ENCODE measurements at regions of chr2 and their contacts with region 1.

Region 1: GRCh38 chr2:64052468-64053241 is 33.4 kb upstream of the VPS54 start:
- DNase-seq: peak in 2 of 5 donors; percentile 30 to 37
- ATAC-seq: peak; percentile 72 to 91 (median 74)
- H3K4me3 ChIP-seq: no peak overlapping the region
- H3K27ac ChIP-seq: peak overlapping the region; percentile 14 to 84 (median 74)
- H3K4me1 ChIP-seq: peaks cover 0 to 30% (median 5%) of the 10 kb centered on the region in 12 donors
- H3K27me3 ChIP-seq: no peaks in the 10 kb centered on the region
- CTCF ChIP-seq: no peak
- POLR2A ChIP-seq: no peak

Region 2: GRCh38 chr2:64144057-64145013 is 91.7 kb after region 1 on chr2 and contains the start of gene PELI1:
- intact Hi-C with region 1: loop called in 8 of 10 experiments (anchors 2 to 5 kb)
- DNase-seq: peak; percentile 95 to 97 (median 96)
- ATAC-seq: peak; percentile 99 to 100 (median 100)
- H3K4me3 ChIP-seq: peak within 1 kb of the TSS; percentile 81 to 99 (median 94)
- H3K27ac ChIP-seq: peak within 1 kb of the TSS; percentile 94 to 99 (median 98)
- H3K4me1 ChIP-seq: peaks cover 0 to 32% (median 10%) of the 10 kb centered on the region in 12 donors
- H3K27me3 ChIP-seq: no peaks in the 10 kb centered on the region
- CTCF ChIP-seq: peak in 7 of 12 donors; percentile 21 to 56 (median 39)
- POLR2A ChIP-seq: peak; percentile 91 to 99
- total RNA-seq, gene PELI1: 5.9 to 14.6 (median 7.3) TPM

Region 3: DNA sequence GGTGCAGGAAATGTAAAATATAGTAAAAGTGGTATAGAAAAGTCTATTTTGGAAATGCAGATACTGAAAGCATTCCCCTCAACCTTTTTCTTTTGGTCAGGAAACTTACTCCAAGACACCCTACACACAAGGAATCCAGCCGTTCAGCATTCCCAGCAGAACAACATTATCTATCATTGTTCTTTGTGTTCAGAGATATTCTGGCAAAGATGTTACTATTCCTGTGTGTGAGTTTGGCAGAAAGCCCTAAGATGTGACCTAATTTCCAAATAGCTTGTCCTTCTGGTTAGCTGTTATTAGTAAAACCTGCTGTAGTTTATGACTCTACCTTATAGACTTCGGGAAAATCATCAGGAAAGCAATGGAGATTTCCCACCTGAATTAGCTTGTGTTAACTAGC is 169.7 kb after region 1 on chr2:
- intact Hi-C with region 1: loop called in 3 of 10 experiments (anchors 5 to 10 kb)
- DNase-seq: peak in 1 of 5 donors; percentile 50
- ATAC-seq: peak; percentile 68 to 83 (median 76)
- H3K4me3 ChIP-seq: no peak overlapping the region
- H3K27ac ChIP-seq: peak overlapping the region in 9 of 12 donors; percentile 10 to 65 (median 37)
- H3K4me1 ChIP-seq: peaks cover 3 to 53% (median 22%) of the 10 kb centered on the region in 12 donors
- H3K27me3 ChIP-seq: no peaks in the 10 kb centered on the region
- CTCF ChIP-seq: no peak
- POLR2A ChIP-seq: no peak

Region 4: GRCh38 chr2:64311948-64312621 is 259.4 kb after region 1 on chr2:
- intact Hi-C with region 1: loop called in 6 of 10 experiments (anchors 1 to 5 kb)
- DNase-seq: peak; percentile 75 to 83 (median 79)
- ATAC-seq: peak; percentile 73 to 97 (median 94)
- H3K4me3 ChIP-seq: peak overlapping the region in 6 of 12 donors; percentile 2 to 40 (median 24)
- H3K27ac ChIP-seq: peak overlapping the region in 10 of 12 donors; percentile 12 to 69 (median 43)
- H3K4me1 ChIP-seq: peaks cover 0 to 26% (median 15%) of the 10 kb centered on the region in 12 donors
- H3K27me3 ChIP-seq: no peaks in the 10 kb centered on the region
- CTCF ChIP-seq: peak; percentile 35 to 71 (median 52)
- POLR2A ChIP-seq: no peak

Region 5: GRCh38 chr2:64562148-64562784 is 509.6 kb after region 1 on chr2:
- intact Hi-C with region 1: loop called in 6 of 10 experiments (anchors 5 to 10 kb)
- DNase-seq: no peak
- ATAC-seq: peak in 2 of 4 donors; percentile 44 to 51
- H3K4me3 ChIP-seq: no peak overlapping the region
- H3K27ac ChIP-seq: no peak overlapping the region
- H3K4me1 ChIP-seq: peaks cover 0 to 24% (median 2%) of the 10 kb centered on the region in 12 donors
- H3K27me3 ChIP-seq: no peaks in the 10 kb centered on the region
- CTCF ChIP-seq: peak in 11 of 12 donors; percentile 18 to 62 (median 40)
- POLR2A ChIP-seq: no peak

Region 6: DNA sequence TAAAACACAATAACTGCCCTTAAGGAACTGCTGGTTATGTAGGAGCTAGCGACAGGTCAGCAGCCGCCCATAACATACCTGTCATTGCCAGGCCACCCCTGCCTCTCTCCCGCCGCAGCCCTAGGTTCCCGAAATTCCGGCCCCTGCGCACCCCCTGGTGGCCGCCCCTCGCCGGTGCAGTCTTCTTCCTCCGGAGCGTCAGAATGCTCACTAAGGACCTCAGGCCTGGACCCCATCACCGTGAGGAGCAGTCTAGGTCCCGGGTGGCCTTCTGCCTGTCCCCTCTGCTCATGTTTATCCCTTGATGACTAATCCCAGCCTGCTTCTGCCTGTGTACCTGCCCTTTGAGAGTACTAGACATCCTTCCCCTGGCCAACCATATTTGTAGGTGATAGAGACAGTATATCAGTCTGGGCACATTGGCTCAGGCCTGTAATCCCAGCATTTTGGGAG is 820.8 kb after region 1 on chr2:
- intact Hi-C with region 1: loop called in 2 of 10 experiments (anchors 10 kb)
- DNase-seq: peak; percentile 68 to 88 (median 75)
- ATAC-seq: peak in 3 of 4 donors; percentile 76 to 82 (median 79)
- H3K4me3 ChIP-seq: peak overlapping the region in 8 of 12 donors; percentile 4 to 49 (median 30)
- H3K27ac ChIP-seq: no peak overlapping the region
- H3K4me1 ChIP-seq: peaks cover 0 to 22% (median 15%) of the 10 kb centered on the region in 12 donors
- H3K27me3 ChIP-seq: no peaks in the 10 kb centered on the region
- CTCF ChIP-seq: peak; percentile 91 to 99 (median 96)
- POLR2A ChIP-seq: peak in 1 of 2 donors; percentile 19